CD8-positive, alpha-beta T cell (primary cell): ENCODE measurements at regions of chr18 and their contacts with region 1.

Region 1: DNA sequence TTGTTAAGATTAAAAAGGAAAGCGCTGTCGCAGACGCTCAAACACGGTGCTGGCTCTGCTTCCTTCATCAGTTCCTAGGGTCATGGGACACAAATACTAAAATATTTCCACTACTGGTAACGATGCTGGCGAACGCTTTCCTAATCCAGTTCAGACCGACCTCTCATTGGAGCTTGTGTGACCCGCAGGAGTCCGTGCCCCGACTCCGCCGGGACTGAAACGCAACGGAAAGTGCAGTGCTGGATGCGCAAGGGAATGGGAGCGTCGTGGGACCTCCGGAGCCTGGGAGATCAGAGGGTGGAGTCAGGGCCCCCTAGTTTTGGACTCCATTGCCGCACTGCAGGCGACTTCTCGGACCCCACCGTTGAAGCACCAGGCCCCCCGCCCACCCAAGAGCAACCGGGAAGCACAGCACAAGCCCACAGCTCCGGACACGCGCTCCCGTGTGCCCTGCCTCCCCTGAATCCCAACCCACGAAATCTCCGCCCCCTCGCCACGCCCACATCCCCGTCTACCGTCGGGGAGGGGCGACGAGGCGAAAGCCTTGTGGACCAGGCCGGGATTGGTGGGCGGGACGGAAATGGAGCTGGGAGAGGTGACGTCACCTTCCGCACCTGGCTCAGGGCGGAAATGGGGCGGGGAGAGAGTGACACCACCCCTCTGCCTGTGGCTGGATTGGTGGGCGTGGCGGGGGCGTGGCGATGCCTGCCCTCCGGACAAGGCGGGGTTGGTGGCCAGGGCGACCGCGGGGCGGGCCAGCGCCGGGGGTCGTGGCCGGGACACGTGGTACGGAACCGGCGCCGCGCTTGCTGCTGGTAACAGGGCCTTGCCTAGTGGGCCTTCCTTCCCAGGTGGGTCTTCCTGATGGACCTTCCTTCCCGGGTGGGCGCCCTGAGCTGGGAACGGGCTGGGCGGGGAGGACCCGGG is at the start of gene CNDP2:
- DNase-seq: peak; percentile 93 to 99 (median 99)
- ATAC-seq: peak; percentile 69
- H3K4me3 ChIP-seq: peak within 1 kb of the TSS; percentile 81
- H3K4me3 Mint-ChIP-seq: peak within 1 kb of the TSS; percentile 94
- H3K27ac ChIP-seq: peak within 1 kb of the TSS; percentile 87 to 90
- H3K27ac Mint-ChIP-seq: peak within 1 kb of the TSS; percentile 97
- H3K4me1 ChIP-seq: peaks cover 37% of the 10 kb centered on the region
- H3K4me1 Mint-ChIP-seq: peaks cover 58% of the 10 kb centered on the region
- H3K27me3 ChIP-seq: no peaks in the 10 kb centered on the region
- H3K27me3 Mint-ChIP-seq: no peaks in the 10 kb centered on the region
- CTCF ChIP-seq: no peak
- total RNA-seq, gene CNDP2: 51.7 to 55.8 TPM

Region 2: GRCh38 chr18:74147779-74148542 is 347.9 kb before region 1 on chr18 and contains the starts of genes FBXO15 and TIMM21:
- CTCF ChIA-PET with region 1: no interaction called
- POLR2A ChIA-PET with region 1: no interaction called
- intact Hi-C with region 1: loop called (anchors 1 kb)
- DNase-seq: peak; percentile 89 to 99 (median 96)
- ATAC-seq: peak; percentile 83
- H3K4me3 ChIP-seq: peak within 1 kb of the TSS; percentile 84 to 91
- H3K4me3 Mint-ChIP-seq: peak within 1 kb of the TSS; percentile 90
- H3K27ac ChIP-seq: peak within 1 kb of the TSS; percentile 92 to 99
- H3K27ac Mint-ChIP-seq: peak within 1 kb of the TSS; percentile 92
- H3K4me1 ChIP-seq: peaks cover 21% of the 10 kb centered on the region
- H3K4me1 Mint-ChIP-seq: peaks cover 53% of the 10 kb centered on the region
- H3K27me3 ChIP-seq: no peaks in the 10 kb centered on the region
- H3K27me3 Mint-ChIP-seq: no peaks in the 10 kb centered on the region
- CTCF ChIP-seq: no peak
- total RNA-seq, gene FBXO15: 1.0 to 1.3 TPM
- total RNA-seq, gene TIMM21: 20.2 to 20.8 TPM

Region 3: GRCh38 chr18:74291771-74292540 is 203.9 kb before region 1 on chr18 and contains the start of gene CYB5A:
- CTCF ChIA-PET with region 1: interaction called, 3 read pairs
- POLR2A ChIA-PET with region 1: interaction called, 3 read pairs
- intact Hi-C with region 1: loop called (anchors 1 kb)
- DNase-seq: peak; percentile 98 to 99 (median 99)
- ATAC-seq: peak; percentile 94
- H3K4me3 ChIP-seq: peak within 1 kb of the TSS; percentile 85 to 100
- H3K4me3 Mint-ChIP-seq: no peak within 1 kb of the TSS
- H3K27ac ChIP-seq: peak within 1 kb of the TSS; percentile 44 to 61
- H3K27ac Mint-ChIP-seq: peak within 1 kb of the TSS; percentile 86
- H3K4me1 ChIP-seq: peaks cover 8% of the 10 kb centered on the region
- H3K4me1 Mint-ChIP-seq: peaks cover 21% of the 10 kb centered on the region
- H3K27me3 ChIP-seq: no peaks in the 10 kb centered on the region
- H3K27me3 Mint-ChIP-seq: no peaks in the 10 kb centered on the region
- CTCF ChIP-seq: peak; percentile 4
- total RNA-seq, gene CYB5A: 4.4 to 5.9 TPM

Region 4: DNA sequence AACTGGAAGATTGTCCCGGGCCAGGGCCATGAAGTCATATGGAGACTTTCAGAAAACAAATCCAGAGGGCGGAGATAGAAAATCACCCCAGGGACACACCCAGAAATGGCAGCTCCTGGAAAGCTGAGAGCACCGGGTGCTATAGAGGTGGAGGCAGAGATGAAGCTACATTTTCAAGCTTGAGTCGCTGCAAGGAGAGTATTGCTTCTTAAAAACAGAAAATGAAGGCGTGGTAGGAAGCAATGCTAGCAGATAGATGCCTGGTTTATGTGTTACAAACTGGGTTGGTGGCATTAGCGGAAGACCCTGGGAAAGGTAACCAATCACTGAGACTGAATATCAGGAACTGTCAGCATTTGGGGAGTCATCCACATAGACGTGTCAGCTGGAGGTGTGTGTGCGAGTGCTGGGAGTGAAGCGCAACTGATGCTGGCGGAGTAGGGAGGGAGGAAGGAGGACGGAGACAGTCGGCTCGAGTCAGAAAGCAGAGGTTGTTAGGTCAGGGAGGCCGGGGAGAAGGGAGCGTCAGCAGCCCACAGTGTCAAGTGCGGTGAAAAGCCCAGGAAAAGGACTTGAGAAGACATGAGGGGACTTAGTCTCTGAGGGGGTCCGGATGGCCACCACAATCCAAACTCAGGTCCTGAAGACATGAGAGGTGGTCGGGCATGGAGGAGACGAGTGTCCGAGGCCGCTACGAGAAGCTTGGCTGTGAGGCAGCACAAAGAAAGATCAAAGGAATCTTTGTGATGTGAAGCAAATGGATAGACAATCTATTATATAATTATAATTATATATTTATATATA is 134.8 kb before region 1 on chr18:
- CTCF ChIA-PET with region 1: interaction called, 340 read pairs
- POLR2A ChIA-PET with region 1: interaction called, 3 read pairs
- intact Hi-C with region 1: no loop called
- DNase-seq: no peak
- ATAC-seq: no peak
- H3K4me3 ChIP-seq: no peak overlapping the region
- H3K4me3 Mint-ChIP-seq: no peak overlapping the region
- H3K27ac ChIP-seq: no peak overlapping the region
- H3K27ac Mint-ChIP-seq: no peak overlapping the region
- H3K4me1 ChIP-seq: no peaks in the 10 kb centered on the region
- H3K4me1 Mint-ChIP-seq: peaks cover 7% of the 10 kb centered on the region
- H3K27me3 ChIP-seq: no peaks in the 10 kb centered on the region
- H3K27me3 Mint-ChIP-seq: peaks cover 3% of the 10 kb centered on the region
- CTCF ChIP-seq: no peak

Region 5: DNA sequence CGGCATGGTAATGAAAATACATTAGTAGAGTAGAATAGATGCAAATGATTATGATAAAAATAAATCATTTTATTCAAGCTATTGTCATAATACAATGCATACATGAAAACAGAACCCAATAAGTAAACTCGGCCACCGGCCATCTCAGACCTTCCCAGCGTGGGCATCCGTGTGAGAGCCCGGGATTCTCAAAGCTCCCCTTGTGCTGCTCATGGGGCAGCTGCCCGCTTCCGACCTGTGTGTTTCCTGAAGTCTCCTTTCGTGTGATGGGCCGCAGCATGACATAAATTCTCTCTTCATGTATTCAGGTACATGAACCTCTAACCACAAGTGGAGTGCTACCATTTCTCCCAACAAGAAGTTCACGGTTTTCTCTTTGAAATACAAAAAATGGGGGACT is 13.1 kb before region 1 on chr18:
- CTCF ChIA-PET with region 1: interaction called, 25 read pairs
- POLR2A ChIA-PET with region 1: interaction called, 4 read pairs
- intact Hi-C with region 1: no loop called
- DNase-seq: no peak
- ATAC-seq: no peak
- H3K4me3 ChIP-seq: no peak overlapping the region
- H3K4me3 Mint-ChIP-seq: no peak overlapping the region
- H3K27ac ChIP-seq: no peak overlapping the region
- H3K27ac Mint-ChIP-seq: no peak overlapping the region
- H3K4me1 ChIP-seq: peaks cover 15% of the 10 kb centered on the region
- H3K4me1 Mint-ChIP-seq: peaks cover 13% of the 10 kb centered on the region
- H3K27me3 ChIP-seq: no peaks in the 10 kb centered on the region
- H3K27me3 Mint-ChIP-seq: peaks cover 2% of the 10 kb centered on the region
- CTCF ChIP-seq: no peak

Region 6: DNA sequence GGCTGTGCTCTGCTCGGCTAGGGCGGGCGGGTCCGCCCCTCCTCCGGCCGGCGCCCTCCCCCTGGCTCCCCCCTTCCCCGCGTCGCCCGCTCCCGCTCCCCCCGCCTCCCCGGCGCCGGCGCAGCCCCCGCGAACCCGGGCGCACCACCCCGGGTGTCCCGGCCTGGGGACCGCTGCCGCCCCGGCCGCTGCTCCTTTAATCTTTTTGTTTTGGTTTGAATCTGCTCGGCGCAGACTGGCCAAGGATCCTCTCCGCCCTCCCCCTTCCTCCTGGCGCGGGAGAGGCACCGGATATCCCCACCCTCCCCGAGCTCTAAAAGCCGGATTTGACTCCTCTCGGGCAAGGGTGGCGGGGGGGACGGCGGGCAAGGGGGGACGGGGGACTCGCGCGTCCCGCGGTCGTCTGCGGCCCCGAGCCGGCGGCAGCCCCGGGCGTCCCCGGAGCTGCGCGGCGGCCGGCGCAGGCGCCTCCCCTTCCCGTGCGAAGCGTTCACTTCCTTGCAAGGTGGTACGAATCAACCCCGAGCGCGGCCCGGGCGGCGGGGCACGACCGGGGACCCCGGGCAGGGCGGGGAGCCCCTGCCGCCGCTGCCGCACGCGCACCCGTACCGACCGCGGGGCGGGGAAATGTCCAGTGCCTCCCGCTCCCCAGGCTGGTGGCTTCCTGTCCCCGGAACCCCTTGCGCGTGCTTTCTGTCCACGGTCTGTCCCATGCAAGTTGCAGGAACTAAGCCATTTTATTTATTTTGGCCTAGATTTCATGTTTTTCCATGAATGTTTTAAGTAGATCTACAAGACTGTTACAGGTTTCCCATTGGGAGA is 713.5 kb after region 1 on chr18 and contains the start of gene PTGR3:
- CTCF ChIA-PET with region 1: no interaction called
- POLR2A ChIA-PET with region 1: interaction called, 3 read pairs
- intact Hi-C with region 1: loop called (anchors 1 to 10 kb)
- DNase-seq: peak; percentile 44 to 91 (median 76)
- ATAC-seq: peak; percentile 51
- H3K4me3 ChIP-seq: peak within 1 kb of the TSS; percentile 65 to 82
- H3K4me3 Mint-ChIP-seq: peak within 1 kb of the TSS; percentile 99
- H3K27ac ChIP-seq: peak within 1 kb of the TSS; percentile 66 to 75
- H3K27ac Mint-ChIP-seq: peak within 1 kb of the TSS; percentile 93
- H3K4me1 ChIP-seq: peaks cover 55% of the 10 kb centered on the region
- H3K4me1 Mint-ChIP-seq: peaks cover 66% of the 10 kb centered on the region
- H3K27me3 ChIP-seq: no peaks in the 10 kb centered on the region
- H3K27me3 Mint-ChIP-seq: peaks cover 3% of the 10 kb centered on the region
- CTCF ChIP-seq: no peak
- total RNA-seq, gene PTGR3: 6.3 to 7.8 TPM